AG04450 (cell line): ENCODE measurements at regions of chr14 and their contacts with region 1.

Region 1: DNA sequence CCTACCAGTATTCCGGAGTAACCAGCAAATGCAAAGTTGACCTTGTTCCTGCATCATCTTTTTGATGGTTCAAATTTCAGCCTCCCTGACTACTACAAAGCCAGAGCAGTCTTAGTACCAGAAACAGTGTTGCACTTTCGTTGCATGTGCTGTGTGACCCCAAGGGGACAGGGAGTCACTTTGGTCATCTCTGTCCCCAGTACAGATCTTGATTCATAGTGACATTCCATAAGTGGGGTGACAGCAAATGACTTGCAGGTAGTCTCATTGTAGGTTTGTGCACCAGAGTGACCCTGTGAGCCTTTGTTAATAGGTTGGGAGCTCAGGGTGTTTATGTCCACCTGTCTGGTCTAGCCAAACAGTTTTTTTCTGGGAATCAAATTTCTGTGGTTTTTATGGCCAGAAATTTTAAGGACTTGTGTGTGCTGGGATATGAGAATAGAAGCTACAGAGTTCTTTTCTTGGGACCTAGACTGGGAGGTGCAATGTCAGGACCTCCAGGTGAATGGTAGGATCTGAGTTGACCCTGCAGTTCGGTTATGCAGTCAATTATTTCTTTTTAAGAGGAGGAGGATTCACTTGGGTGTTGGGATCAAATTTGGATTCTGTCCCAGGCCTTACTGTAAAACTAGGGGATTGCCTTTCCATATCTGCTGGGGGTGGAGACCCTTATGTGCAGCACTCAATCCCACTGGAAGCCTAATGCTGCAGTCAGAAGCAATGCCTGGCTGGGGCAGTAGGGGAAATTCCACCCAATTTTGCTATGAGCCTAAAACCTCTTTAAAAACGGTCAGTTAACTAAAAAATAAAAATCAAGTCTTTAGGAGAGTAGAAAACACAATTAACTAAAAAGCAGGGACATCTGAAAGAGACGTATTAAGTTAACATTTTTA is 10.1 kb downstream of the EIF5 start:
- DNase-seq: no peak
- H3K4me3 ChIP-seq: no peak overlapping the region
- H3K27ac ChIP-seq: no peak overlapping the region
- H3K27me3 ChIP-seq: no peaks in the 10 kb centered on the region
- CTCF ChIP-seq: no peak

Region 2: DNA sequence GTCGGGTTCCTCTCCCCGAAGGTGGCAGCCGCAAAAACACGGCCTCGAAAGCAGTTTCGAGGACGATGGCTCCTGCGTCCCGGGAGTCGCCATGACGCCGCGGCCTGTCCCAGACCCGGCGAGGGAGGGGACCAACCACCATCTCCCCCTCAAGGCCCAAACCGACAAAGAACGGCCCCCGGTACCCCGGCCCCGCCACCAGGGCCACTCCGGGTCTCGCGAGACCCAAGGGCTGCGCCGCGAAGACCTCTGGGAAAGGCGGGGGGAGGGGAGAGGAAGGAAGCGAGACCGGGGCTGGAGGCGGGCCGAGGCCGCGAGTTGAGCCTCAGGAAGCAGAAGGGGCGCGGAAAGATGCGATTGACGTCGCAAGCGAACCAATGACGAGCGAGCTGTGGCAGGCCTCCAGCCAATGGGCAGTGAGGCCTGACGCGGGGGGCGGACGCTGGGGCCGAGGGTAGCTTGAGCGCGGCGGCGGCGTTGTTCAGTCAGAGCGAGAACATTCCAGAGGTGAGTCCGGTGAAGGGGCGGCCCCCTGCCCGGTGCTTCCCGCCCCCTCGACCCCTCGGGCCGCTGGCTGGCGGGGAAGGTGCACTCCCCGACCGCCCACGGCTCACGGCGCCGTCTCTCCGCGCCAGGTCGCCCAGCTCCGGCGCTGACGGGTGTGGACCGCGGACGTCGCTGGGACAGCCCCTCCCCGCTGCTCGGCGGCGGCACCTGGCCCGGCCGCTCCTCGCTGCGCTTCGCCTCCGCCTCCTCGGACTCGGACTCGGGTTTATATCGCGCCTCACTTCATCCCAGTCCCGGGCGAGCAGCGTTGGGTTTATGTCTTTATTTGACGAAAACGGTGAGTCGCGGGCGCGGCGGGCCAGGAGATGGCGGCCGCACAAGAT is 10.2 kb before region 1 on chr14 and contains the start of gene EIF5:
- CTCF ChIA-PET with region 1: no interaction called
- POLR2A ChIA-PET with region 1: interaction called, 32 read pairs
- DNase-seq: peak; percentile 97
- H3K4me3 ChIP-seq: peak within 1 kb of the TSS; percentile 90
- H3K27ac ChIP-seq: peak within 1 kb of the TSS; percentile 97
- H3K27me3 ChIP-seq: no peaks in the 10 kb centered on the region
- CTCF ChIP-seq: peak; percentile 23; the same call in 1 of the 2 replicates
- polyA plus RNA-seq, gene EIF5: 365 and 477 TPM in 2 replicates

Region 3: DNA sequence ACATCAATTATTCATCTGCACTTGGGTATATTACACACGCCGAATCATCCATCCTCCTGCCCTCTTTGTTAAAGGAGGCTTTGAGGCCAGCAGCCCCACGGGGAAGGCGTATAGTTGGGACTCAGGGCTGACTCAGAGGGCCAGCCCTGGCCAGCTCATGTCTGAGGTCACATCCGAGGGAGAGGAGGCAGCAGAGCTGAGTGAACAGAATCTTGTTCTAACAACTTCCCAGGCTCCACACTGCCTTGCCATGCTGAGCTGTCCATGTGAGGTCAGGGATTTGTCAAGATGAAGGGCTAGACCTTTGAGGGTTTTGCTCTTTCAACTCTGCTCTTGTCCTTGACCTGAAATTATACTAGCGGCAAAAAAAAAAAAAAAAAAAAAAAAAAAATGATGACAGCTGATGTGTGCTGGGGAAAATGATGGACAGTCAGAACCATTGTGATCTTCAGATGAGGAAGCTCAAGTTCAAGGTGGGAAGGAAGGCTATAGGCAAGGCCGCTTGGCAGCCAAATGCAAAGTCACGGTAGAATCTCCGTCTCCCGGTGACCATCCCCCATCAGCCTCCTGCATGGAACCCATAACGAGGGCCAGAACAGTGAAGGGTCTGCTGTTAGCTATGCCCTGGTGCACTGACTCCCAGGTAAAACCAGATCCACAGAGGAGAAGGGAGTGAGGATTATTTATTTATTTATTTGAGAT is 28.6 kb after region 1 on chr14:
- CTCF ChIA-PET with region 1: interaction called, 10 read pairs
- POLR2A ChIA-PET with region 1: no interaction called
- DNase-seq: peak; percentile 76
- H3K4me3 ChIP-seq: no peak overlapping the region
- H3K27ac ChIP-seq: peak overlapping the region; percentile 73
- H3K27me3 ChIP-seq: no peaks in the 10 kb centered on the region
- CTCF ChIP-seq: no peak

Region 4: GRCh38 chr14:103418481-103418818 is 74.3 kb after region 1 on chr14:
- CTCF ChIA-PET with region 1: no interaction called
- POLR2A ChIA-PET with region 1: interaction called, 10 read pairs
- DNase-seq: no peak
- H3K4me3 ChIP-seq: no peak overlapping the region
- H3K27ac ChIP-seq: peak overlapping the region; percentile 66
- H3K27me3 ChIP-seq: no peaks in the 10 kb centered on the region
- CTCF ChIP-seq: no peak